Panc1 (cell line): ENCODE measurements at regions of chr5 and their contacts with region 1.

Region 1: DNA sequence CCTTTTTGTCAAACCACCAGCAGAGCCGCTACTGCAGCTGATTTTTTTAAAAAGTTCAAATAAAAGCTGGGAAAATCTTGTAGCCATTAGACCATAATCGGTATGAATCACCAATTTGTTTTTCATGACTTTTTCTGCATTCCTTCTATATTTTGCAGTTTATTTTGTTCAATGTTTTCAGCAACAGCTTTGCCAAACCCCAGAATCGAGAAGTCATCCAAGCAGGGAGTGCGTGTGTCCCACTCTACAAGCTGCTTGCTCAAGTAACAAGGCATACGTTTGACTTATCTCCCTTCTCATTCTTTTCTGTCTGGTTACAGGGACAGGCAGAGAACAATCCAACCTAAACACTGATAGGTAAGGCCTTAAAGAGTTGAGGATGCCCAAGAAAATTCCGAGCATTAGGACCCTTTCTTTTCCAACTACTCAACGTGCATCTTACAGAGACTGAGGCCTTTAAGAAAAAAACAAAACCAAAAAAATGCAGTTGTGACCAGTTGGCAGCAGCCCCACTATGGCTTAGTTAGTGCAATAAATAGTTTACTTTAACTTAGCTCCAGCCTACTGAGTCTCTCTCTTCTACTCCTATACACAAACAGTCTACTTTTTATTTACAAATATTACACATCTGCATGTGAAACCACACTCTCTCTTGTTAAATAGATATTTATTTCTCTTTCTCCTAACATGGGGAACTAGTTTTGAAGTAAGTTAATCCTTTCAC is 134.7 kb upstream of the SLIT3 start:
- DNase-seq: no peak
- ATAC-seq: no peak
- H3K4me3 ChIP-seq: no peak overlapping the region
- H3K27ac ChIP-seq: no peak overlapping the region
- H3K4me1 ChIP-seq: no peaks in the 10 kb centered on the region
- H3K27me3 ChIP-seq: no peaks in the 10 kb centered on the region
- CTCF ChIP-seq: no peak

Region 2: DNA sequence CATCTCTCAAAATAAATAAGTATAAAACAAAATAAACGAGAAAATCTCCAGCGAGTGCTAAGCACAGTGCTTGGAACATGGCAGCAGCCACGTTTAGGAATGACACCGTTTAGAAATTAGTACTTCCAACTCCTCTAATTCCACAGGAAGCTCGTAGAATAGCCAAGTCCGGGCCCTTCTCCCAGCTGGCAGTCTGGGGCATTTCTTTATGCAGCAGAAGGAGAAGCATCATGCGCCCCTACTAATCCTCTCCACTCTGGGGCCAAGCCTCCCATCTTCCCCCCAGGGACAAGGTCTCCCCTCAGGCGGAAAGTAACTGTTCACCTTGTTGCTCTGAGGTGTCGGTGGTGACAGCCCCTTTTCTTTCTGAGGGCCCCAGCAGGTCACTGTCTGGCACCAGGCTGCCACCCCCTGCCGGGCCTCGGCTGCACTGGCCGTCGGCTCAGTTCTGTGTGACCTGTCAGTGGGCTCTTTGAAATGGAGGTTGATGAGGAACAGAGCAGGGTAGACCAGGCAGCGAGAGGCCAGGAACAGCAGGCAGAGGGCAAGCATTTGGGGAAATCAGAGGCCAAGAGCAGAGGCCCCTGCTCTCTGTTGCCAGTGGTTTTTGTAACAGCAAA is 1257.7 kb before region 1 on chr5:
- CTCF ChIA-PET with region 1: interaction called, 17 read pairs
- POLR2A ChIA-PET with region 1: no interaction called
- in situ Hi-C with region 1: no loop called
- intact Hi-C with region 1: no loop called
- DNase-seq: no peak
- ATAC-seq: no peak
- H3K4me3 ChIP-seq: no peak overlapping the region
- H3K27ac ChIP-seq: no peak overlapping the region
- H3K4me1 ChIP-seq: no peaks in the 10 kb centered on the region
- H3K27me3 ChIP-seq: no peaks in the 10 kb centered on the region
- CTCF ChIP-seq: no peak